ENCODE measurements at regions of chr7 and their contacts with region 1.

Region 1: DNA sequence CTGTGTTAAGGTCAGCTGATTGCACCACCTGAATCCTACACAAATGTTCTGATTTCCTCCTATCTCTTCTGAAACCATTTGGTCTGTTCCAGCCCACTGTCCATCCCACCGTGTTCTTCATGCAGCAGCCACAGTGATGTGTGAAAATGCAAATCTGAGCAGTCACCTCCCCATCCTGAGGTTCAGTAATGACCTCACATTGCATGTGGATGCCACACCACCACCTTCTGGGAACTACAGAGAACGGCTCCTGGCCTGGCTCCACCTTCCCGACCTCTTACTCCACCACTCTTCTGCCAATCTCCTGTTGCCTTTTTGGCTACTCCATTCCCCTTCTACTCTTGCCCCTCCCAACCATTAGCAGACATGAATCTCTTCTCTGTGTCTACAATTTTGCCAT is 244.4 kb downstream of the TNS3 start:
- DNase-seq: peak; percentile 38 to 42
- ATAC-seq: peak in 7 of 8 donors; percentile 56 to 75 (median 67)
- H3K4me3 ChIP-seq: no peak overlapping the region
- H3K27ac ChIP-seq: peak overlapping the region in 5 of 10 donors; percentile 70 to 82 (median 77)
- H3K4me1 ChIP-seq: peaks cover 0 to 52% (median 30%) of the 10 kb centered on the region in 9 donors
- H3K27me3 ChIP-seq: no peaks in the 10 kb centered on the region
- CTCF ChIP-seq: peak in 6 of 9 donors; percentile 9 to 48 (median 40)

Region 2: DNA sequence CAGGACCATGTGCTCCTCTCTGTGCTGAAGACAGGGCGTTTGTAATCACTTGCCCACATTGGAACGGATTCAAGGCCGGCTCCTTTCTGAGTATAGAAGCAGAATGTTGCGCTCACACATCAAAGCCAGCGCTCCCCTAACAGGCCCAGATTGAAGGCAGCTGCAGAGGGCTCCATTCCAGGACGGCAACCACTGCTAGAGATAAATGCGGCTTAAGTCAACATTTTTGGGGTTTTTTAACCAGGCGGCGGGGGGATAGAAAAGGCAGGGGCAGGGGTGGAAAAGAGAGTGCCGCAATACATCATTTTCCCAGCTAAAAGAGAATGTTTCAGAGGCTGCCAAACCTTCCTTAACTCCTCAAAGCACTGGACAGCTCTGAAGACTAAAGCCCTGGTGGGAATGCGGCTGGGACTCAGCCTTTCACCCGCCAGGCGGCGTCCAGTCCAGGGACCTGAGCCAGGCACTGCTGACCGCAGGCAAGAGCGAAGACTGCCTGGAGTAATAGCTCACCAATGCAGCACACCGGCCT is 54.8 kb after region 1 on chr7:
- intact Hi-C with region 1: loop called in 1 of 10 experiments (anchors 10 kb)
- DNase-seq: peak; percentile 53 to 76
- ATAC-seq: peak; percentile 80 to 91 (median 84)
- H3K4me3 ChIP-seq: no peak overlapping the region
- H3K27ac ChIP-seq: no peak overlapping the region
- H3K4me1 ChIP-seq: peaks cover 0 to 11% (median 6%) of the 10 kb centered on the region in 9 donors
- H3K27me3 ChIP-seq: no peaks in the 10 kb centered on the region
- CTCF ChIP-seq: peak; percentile 9 to 58 (median 37)